ENCODE measurements at regions of chr10 and their contacts with region 1.

Region 1: GRCh38 chr10:99620713-99621453 is 644 bp upstream of the SLC25A28 start:
- DNase-seq: peak; percentile 62
- H3K4me3 ChIP-seq: peak overlapping the region; percentile 78
- H3K27me3 ChIP-seq: no peaks in the 10 kb centered on the region
- CTCF ChIP-seq: no peak

Region 2: GRCh38 chr10:99435986-99436638 is 184.8 kb before region 1 on chr10:
- CTCF ChIA-PET with region 1: interaction called, 14 read pairs
- POLR2A ChIA-PET with region 1: no interaction called
- DNase-seq: peak; percentile 4
- H3K4me3 ChIP-seq: no peak overlapping the region
- H3K27me3 ChIP-seq: no peaks in the 10 kb centered on the region
- CTCF ChIP-seq: peak; percentile 52

Region 3: DNA sequence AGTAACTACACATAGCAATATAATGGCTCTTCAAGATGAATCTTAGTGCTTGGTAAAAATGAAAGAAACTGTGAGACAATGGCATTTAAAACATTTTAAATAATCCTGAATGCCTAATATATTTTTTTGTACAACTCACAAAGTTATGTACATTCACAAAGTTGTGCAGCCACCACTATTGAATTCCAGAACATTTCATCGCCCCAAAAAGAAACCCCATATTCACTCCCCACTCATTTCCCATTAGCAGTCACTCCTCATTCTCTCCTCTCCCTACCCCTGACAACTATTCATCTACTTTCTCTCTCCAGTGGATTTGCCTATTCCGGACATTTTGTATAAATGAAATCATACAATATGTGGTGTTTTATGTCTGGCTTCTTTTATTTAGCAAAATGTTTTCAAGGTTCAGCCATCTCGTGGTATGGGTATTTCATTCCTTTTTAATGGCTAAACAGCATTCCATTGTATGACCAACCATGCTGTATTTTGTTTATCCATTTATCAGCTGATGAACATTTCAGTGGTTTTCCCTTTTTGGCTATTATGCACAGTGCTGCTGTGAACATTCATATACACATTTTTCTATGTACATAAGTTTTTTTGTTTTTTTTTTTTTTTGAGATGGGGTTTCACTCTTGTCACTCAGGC is 73.2 kb after region 1 on chr10:
- CTCF ChIA-PET with region 1: interaction called, 3 read pairs
- POLR2A ChIA-PET with region 1: interaction called, 12 read pairs
- DNase-seq: peak; percentile 91
- H3K4me3 ChIP-seq: no peak overlapping the region
- H3K27me3 ChIP-seq: no peaks in the 10 kb centered on the region
- CTCF ChIP-seq: no peak